ENCODE measurements at regions of chr2 and their contacts with region 1.

Region 1: DNA sequence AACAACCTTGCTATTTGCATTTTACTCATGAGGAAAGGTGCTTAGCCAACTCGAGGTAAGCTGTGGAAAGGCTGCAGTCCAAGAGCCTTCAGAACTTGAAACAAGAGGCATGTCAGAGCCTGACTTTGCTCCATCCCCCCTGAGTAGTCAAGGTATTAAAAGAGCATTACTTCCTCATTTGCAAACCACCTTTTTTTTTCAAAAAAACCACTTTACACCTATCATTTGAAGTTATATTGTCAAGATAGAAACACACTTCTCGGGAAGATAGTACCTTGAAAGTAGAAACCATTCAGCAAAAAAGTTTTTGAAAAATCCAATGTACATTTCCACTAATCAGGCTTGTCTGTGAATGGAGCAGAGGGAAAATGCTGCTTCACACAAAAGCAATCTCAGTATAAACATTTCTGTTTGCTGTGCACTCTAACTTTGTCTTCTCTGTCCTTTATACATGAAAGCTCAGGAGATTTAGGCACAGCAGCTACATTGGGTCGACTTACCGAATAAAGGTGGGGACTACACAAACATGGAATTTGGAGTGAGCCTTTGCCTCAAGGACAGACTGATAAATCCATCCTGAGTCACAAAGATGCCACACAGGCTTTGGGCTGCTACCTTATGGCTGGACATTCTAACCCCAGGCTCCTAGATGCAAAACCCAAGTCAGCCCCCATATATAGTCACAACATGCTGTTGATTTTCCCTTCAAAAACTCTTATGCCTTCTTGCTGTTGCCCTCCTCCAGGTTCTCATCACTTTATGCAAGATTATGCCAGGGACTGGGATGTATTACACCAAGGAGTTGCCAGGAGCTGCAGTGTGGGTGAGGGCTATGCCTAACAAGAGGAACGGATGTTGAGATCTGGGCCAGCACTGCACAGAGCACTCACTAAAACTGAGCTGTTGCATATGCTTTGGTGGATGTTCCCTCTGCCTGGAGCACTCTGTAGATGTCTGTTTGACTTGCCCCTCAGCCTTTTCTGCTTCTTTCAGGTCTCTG is 41.4 kb upstream of the EML4 start:
- DNase-seq: peak; percentile 43
- ATAC-seq: peak; percentile 17
- H3K4me3 Mint-ChIP-seq: peak overlapping the region; percentile 48
- H3K27ac Mint-ChIP-seq: peak overlapping the region; percentile 76
- H3K4me1 Mint-ChIP-seq: peaks cover 87% of the 10 kb centered on the region
- H3K27me3 Mint-ChIP-seq: no peaks in the 10 kb centered on the region

Region 2: GRCh38 chr2:42141687-42142546 is 14.2 kb after region 1 on chr2:
- CTCF ChIA-PET with region 1: interaction called, 8 read pairs
- POLR2A ChIA-PET with region 1: interaction called, 4 read pairs
- intact Hi-C with region 1: loop called in 1 of 2 experiments (anchors 2 kb)
- DNase-seq: peak; percentile 46
- ATAC-seq: peak; percentile 64
- H3K4me3 Mint-ChIP-seq: peak overlapping the region; percentile 45
- H3K27ac Mint-ChIP-seq: peak overlapping the region; percentile 74
- H3K4me1 Mint-ChIP-seq: peaks cover 47% of the 10 kb centered on the region
- H3K27me3 Mint-ChIP-seq: no peaks in the 10 kb centered on the region

Region 3: GRCh38 chr2:42314892-42315467 is 187.3 kb after region 1 on chr2:
- CTCF ChIA-PET with region 1: no interaction called
- POLR2A ChIA-PET with region 1: no interaction called
- intact Hi-C with region 1: no loop called
- DNase-seq: no peak
- ATAC-seq: peak; percentile 51
- H3K4me3 Mint-ChIP-seq: no peak overlapping the region
- H3K27ac Mint-ChIP-seq: peak overlapping the region; percentile 83
- H3K4me1 Mint-ChIP-seq: peaks cover 24% of the 10 kb centered on the region
- H3K27me3 Mint-ChIP-seq: no peaks in the 10 kb centered on the region

Measured in activated CD4-positive, alpha-beta T cell treated with anti-CD3 and anti-CD28 coated beads for 36 hours (primary cell).